Dorsolateral prefrontal cortex (tissue), 120 donors: ENCODE measurements at regions of chr3 and their contacts with region 1.

Region 1: DNA sequence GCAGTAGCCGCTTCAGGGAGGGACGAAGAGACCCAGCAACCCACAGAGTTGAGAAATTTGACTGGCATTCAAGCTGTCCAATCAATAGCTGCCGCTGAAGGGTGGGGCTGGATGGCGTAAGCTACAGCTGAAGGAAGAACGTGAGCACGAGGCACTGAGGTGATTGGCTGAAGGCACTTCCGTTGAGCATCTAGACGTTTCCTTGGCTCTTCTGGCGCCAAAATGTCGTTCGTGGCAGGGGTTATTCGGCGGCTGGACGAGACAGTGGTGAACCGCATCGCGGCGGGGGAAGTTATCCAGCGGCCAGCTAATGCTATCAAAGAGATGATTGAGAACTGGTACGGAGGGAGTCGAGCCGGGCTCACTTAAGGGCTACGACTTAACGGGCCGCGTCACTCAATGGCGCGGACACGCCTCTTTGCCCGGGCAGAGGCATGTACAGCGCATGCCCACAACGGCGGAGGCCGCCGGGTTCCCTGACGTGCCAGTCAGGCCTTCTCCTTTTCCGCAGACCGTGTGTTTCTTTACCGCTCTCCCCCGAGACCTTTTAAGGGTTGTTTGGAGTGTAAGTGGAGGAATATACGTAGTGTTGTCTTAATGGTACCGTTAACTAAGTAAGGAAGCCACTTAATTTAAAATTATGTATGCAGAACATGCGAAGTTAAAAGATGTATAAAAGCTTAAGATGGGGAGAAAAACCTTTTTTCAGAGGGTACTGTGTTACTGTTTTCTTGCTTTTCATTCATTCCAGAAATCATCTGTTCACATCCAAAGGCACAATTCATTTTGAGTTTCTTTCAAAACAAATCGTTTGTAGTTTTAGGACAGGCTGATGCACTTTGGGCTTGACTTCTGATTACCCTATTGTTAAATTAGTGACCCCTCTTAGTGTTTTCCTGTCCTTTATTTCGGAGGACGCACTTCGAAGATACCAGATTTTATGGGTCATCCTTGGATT is at the start of gene MLH1:
- DNase-seq: peak; percentile 91 to 100 (median 94)
- H3K4me3 ChIP-seq: peak within 1 kb of the TSS; percentile 60 to 99 (median 86)
- H3K27ac ChIP-seq: peak within 1 kb of the TSS; percentile 89 to 100 (median 99)
- H3K27me3 ChIP-seq: no peaks in the 10 kb centered on the region
- CTCF ChIP-seq: peak in 3 of 56 donors; percentile 9 to 32 (median 12)
- total RNA-seq, gene MLH1: 21.0 to 55.1 (median 30.6) TPM

Region 2: GRCh38 chr3:36957862-36958686 is 35.5 kb before region 1 on chr3:
- intact Hi-C with region 1: no loop called
- DNase-seq: no peak
- H3K4me3 ChIP-seq: no peak overlapping the region
- H3K27ac ChIP-seq: no peak overlapping the region
- H3K27me3 ChIP-seq: no peaks in the 10 kb centered on the region
- CTCF ChIP-seq: no peak

Region 3: DNA sequence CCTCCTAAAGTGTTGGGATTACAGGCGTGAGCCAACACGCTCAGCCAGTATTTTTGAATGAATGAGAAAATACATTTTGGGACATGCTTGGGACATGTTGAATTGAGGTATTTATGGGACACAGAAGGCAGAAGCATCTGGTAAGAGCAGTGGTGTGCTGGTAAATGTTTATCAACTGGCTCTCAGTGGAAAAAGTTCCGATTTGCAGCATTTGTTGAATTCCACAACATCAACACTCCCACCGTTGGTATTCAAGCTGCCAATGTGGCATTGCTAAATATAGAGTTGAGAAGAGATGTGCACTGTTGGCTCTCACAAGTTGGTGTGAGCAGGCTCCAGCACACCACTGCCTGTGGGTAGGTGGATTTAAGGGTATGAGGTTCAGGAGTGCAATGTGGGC is 216.6 kb after region 1 on chr3:
- intact Hi-C with region 1: loop called in 1 of 2 experiments (anchors 5 kb)
- DNase-seq: peak in 1 of 10 donors; percentile 14
- H3K4me3 ChIP-seq: no peak overlapping the region
- H3K27ac ChIP-seq: peak overlapping the region in 1 of 59 donors; percentile 19
- H3K27me3 ChIP-seq: no peaks in the 10 kb centered on the region
- CTCF ChIP-seq: no peak

Region 4: GRCh38 chr3:38453075-38453912 is 1459.7 kb after region 1 on chr3 and contains the start of gene ACVR2B:
- intact Hi-C with region 1: loop called in 1 of 2 experiments (anchors 5 kb)
- DNase-seq: peak; percentile 82 to 92 (median 88)
- H3K4me3 ChIP-seq: peak within 1 kb of the TSS; percentile 69 to 96 (median 89)
- H3K27ac ChIP-seq: peak within 1 kb of the TSS; percentile 26 to 96 (median 83)
- H3K27me3 ChIP-seq: no peaks in the 10 kb centered on the region
- CTCF ChIP-seq: peak in 9 of 56 donors; percentile 12 to 47 (median 21)
- total RNA-seq, gene ACVR2B: 10.4 to 24.2 (median 15.9) TPM